ENCODE measurements at regions of chr3 and their contacts with region 1.

Region 1: GRCh38 chr3:23244324-23245041 is 41.4 kb downstream of the UBE2E2 start:
- DNase-seq: no peak
- H3K4me3 ChIP-seq: no peak overlapping the region
- CTCF ChIP-seq: no peak

Region 2: DNA sequence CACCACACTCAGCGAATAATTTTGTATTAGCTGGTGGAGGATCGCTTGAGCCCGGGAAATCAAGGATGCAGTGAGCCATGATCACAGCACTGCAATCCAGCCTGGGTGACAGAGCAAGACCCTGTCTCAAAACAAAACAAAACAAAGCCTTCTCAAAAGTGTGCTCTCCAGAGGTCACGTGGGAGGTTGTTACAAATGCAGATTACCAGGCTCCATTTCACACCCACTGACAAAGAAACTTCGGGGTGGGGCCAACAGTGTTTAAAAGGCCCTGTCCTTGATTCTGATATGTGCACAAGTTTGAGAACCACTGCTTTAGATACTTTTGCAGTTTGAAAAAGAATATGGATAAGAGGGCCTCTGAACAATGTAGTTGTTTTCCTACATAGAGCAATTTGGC is 39.1 kb after region 1 on chr3:
- in situ Hi-C with region 1: loop called (anchors 5 kb)
- DNase-seq: no peak
- H3K4me3 ChIP-seq: no peak overlapping the region
- CTCF ChIP-seq: no peak

Region 3: DNA sequence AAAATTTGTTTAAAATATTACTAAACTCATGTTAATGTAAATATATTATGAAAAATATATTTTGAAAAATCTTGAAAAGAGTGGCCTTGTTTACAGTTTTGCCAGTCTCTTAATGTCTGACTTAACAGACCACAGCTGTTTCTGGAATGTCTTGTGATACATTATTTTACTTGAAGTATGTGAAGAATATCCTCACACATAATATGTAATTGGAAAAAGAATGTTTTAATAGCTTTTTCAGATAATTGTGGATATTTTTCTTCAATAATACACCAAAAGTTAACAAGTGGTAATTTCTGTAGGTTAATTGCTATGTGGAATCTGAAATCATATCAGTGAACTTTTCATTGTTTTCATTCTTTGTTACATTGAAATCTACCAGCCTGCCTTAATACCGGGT is 59.9 kb after region 1 on chr3:
- in situ Hi-C with region 1: no loop called
- DNase-seq: no peak
- H3K4me3 ChIP-seq: no peak overlapping the region
- CTCF ChIP-seq: no peak